ENCODE measurements at regions of chr11 and their contacts with region 1.

Region 1: GRCh38 chr11:62860835-62861563 is 19.7 kb upstream of the SLC3A2 start:
- DNase-seq: peak; percentile 14
- H3K4me3 Mint-ChIP-seq: no peak overlapping the region
- H3K27ac Mint-ChIP-seq: no peak overlapping the region
- H3K4me1 Mint-ChIP-seq: peaks cover 43% of the 10 kb centered on the region
- H3K27me3 Mint-ChIP-seq: no peaks in the 10 kb centered on the region

Region 2: GRCh38 chr11:62831520-62832335 is 29.3 kb before region 1 on chr11 and contains the start of gene STX5:
- CTCF ChIA-PET with region 1: no interaction called
- POLR2A ChIA-PET with region 1: interaction called, 40 read pairs
- intact Hi-C with region 1: loop called (anchors 2 kb)
- DNase-seq: peak; percentile 100
- H3K4me3 Mint-ChIP-seq: peak within 1 kb of the TSS; percentile 84
- H3K27ac Mint-ChIP-seq: peak within 1 kb of the TSS; percentile 93
- H3K4me1 Mint-ChIP-seq: peaks cover 42% of the 10 kb centered on the region
- H3K27me3 Mint-ChIP-seq: no peaks in the 10 kb centered on the region
- total RNA-seq, gene STX5: 24.6 to 29.2 TPM

Region 3: GRCh38 chr11:62874851-62875250 is 13.9 kb after region 1 on chr11:
- CTCF ChIA-PET with region 1: interaction called, 31 read pairs
- POLR2A ChIA-PET with region 1: interaction called, 234 read pairs
- intact Hi-C with region 1: loop called (anchors 2 kb)
- DNase-seq: no peak
- H3K4me3 Mint-ChIP-seq: no peak overlapping the region
- H3K27ac Mint-ChIP-seq: no peak overlapping the region
- H3K4me1 Mint-ChIP-seq: peaks cover 7% of the 10 kb centered on the region
- H3K27me3 Mint-ChIP-seq: no peaks in the 10 kb centered on the region

Region 4: GRCh38 chr11:62974848-62975522 is 114.0 kb after region 1 on chr11:
- CTCF ChIA-PET with region 1: no interaction called
- POLR2A ChIA-PET with region 1: no interaction called
- intact Hi-C with region 1: no loop called
- DNase-seq: peak; percentile 26
- H3K4me3 Mint-ChIP-seq: no peak overlapping the region
- H3K27ac Mint-ChIP-seq: no peak overlapping the region
- H3K4me1 Mint-ChIP-seq: no peaks in the 10 kb centered on the region
- H3K27me3 Mint-ChIP-seq: peaks cover 10% of the 10 kb centered on the region